ENCODE measurements at regions of chr11 and their contacts with region 1.

Region 1: DNA sequence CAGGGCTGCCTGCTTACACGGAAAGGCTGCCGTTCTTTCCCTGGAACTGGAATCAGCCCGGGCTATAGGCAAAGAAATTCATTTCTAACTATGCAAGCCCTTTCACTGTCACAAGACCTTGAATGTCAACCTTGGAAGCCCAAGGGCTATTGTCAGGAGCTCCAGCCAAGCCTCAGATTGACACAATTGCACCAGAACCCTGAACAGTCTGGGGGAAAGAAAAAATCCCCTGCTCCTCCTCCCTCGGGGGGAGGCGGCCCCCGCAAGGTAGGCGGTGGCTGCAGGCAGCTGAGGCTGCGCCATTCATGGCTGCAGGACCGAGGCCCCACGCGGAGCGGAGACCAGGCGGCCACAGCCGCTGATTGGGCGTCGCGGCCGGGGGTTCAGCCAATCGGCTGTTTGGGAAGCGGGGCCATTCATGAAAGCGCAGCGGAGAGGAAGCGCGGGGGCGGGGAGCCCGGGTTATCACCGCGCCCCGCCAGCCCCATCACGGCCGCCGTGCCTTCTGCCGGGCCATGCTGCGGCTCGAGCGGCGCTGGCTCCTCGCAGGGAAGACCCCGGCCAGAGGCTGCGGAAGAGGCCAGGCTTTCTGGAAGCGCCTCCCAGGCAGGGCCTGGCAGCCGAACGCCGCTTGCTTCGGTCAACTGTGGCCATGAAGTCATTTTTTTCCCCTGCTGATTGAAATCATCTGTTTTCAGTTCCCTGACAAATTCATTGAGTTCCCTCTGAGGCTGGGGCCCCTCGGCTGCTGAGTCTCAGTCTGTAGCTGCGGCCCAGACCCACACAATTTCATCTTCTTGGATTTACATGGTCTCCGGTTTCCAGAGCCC is 38.1 kb upstream of the LINC01488 start:
- DNase-seq: peak; percentile 90 to 97
- H3K4me3 ChIP-seq: peak overlapping the region; percentile 58
- H3K27ac ChIP-seq: peak overlapping the region; percentile 88
- H3K4me1 ChIP-seq: peaks cover 56% of the 10 kb centered on the region
- H3K27me3 ChIP-seq: no peaks in the 10 kb centered on the region
- CTCF ChIP-seq: no peak

Region 2: GRCh38 chr11:69337211-69337721 is 106.1 kb before region 1 on chr11:
- CTCF ChIA-PET with region 1: no interaction called
- POLR2A ChIA-PET with region 1: no interaction called
- intact Hi-C with region 1: loop called (anchors 1 kb)
- DNase-seq: peak in 1 of 2 experiments; percentile 36
- H3K4me3 ChIP-seq: no peak overlapping the region
- H3K27ac ChIP-seq: peak overlapping the region; percentile 24
- H3K4me1 ChIP-seq: peaks cover 54% of the 10 kb centered on the region
- H3K27me3 ChIP-seq: no peaks in the 10 kb centered on the region
- CTCF ChIP-seq: no peak

Region 3: GRCh38 chr11:69382131-69383128 is 60.9 kb before region 1 on chr11:
- CTCF ChIA-PET with region 1: no interaction called
- POLR2A ChIA-PET with region 1: no interaction called
- intact Hi-C with region 1: loop called (anchors 1 kb)
- DNase-seq: peak; percentile 82 to 88
- H3K4me3 ChIP-seq: peak overlapping the region; percentile 43; the same call in 1 of the 2 replicates
- H3K27ac ChIP-seq: peak overlapping the region; percentile 59
- H3K4me1 ChIP-seq: peaks cover 30% of the 10 kb centered on the region
- H3K27me3 ChIP-seq: no peaks in the 10 kb centered on the region
- CTCF ChIP-seq: no peak

Region 4: DNA sequence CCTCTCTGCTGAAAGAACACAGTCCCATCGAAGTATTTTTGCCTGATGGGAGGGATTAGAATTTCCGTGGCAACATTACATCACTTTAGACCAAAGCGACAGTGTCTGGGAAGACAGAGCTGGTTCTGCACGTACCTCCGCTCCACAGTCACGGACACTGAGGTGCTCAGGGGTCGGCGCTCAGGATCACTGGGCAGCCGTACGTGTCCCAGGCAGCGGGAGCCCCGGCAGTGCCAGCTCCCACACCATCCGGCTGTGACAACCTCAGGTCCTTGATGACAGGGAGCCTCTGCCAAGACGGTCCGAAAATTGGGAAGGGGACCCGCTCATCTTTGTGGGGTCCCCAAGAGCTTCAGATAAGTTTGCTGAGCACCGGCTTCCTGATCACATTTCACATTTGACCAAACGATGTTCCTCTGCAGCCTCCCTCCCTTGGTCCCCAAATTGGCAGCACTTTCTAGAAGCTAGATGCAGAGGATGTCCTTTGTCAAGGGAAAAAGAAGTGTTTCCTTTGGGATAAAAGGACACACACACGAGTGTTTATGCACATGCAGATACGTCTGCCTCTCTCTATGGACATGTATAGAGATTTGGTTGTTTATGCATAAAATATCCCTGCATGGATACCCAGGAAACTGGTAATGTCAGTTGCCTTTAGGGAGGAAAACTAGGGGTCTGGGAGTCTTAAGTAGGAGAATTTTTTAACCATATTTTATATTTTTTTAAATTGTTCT is 23.5 kb before region 1 on chr11:
- CTCF ChIA-PET with region 1: no interaction called
- POLR2A ChIA-PET with region 1: interaction called, 6 read pairs
- intact Hi-C with region 1: loop called (anchors 1 kb)
- DNase-seq: no peak
- H3K4me3 ChIP-seq: no peak overlapping the region; the same call in 1 of the 2 replicates
- H3K27ac ChIP-seq: peak overlapping the region; percentile 89
- H3K4me1 ChIP-seq: peaks cover 28% of the 10 kb centered on the region
- H3K27me3 ChIP-seq: no peaks in the 10 kb centered on the region
- CTCF ChIP-seq: no peak

Region 5: DNA sequence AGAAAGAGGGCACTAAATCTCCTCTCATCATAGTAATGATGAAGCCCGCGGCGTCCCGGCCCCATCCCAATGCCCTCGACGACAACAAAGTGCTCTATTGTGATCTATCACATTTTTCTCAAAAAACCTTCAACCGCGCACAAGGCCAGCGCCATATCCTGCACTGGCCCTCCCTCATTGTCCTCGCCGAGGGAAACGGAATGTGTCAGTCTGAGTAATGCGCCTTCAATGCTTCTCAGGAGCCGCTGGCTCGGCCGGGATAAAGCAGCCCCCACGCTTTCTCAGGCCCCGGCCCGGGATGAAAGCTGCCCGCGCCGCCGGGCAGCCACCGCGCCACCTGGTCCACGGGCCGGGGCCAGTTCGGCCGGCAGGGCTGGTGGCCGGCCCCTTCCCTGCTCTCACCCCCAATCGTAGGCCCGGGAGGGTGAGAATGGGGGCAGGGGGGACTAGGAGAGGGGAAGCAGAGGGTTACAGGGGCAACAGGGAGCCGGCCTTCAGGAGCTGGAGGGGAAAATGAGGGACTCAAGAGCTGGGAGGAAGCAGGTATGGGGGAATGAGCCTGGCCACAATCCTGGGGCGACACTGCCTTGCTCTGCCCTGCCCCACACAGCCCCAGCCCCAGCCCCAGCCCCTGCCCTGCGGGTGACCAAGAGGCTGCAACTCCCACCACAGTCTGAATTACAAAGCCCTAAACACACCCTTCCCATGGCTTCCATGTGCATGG is 28.1 kb after region 1 on chr11:
- CTCF ChIA-PET with region 1: no interaction called
- POLR2A ChIA-PET with region 1: no interaction called
- intact Hi-C with region 1: no loop called
- DNase-seq: no peak
- H3K4me3 ChIP-seq: no peak overlapping the region
- H3K27ac ChIP-seq: no peak overlapping the region
- H3K4me1 ChIP-seq: no peaks in the 10 kb centered on the region
- H3K27me3 ChIP-seq: no peaks in the 10 kb centered on the region
- CTCF ChIP-seq: no peak

Region 6: GRCh38 chr11:69497221-69497787 is 54.0 kb after region 1 on chr11:
- CTCF ChIA-PET with region 1: interaction called, 8 read pairs
- POLR2A ChIA-PET with region 1: no interaction called
- intact Hi-C with region 1: loop called (anchors 1 kb)
- DNase-seq: peak; percentile 81 to 93
- H3K4me3 ChIP-seq: no peak overlapping the region
- H3K27ac ChIP-seq: no peak overlapping the region
- H3K4me1 ChIP-seq: peaks cover 14% of the 10 kb centered on the region
- H3K27me3 ChIP-seq: peaks cover 18% of the 10 kb centered on the region
- CTCF ChIP-seq: no peak

Region 7: DNA sequence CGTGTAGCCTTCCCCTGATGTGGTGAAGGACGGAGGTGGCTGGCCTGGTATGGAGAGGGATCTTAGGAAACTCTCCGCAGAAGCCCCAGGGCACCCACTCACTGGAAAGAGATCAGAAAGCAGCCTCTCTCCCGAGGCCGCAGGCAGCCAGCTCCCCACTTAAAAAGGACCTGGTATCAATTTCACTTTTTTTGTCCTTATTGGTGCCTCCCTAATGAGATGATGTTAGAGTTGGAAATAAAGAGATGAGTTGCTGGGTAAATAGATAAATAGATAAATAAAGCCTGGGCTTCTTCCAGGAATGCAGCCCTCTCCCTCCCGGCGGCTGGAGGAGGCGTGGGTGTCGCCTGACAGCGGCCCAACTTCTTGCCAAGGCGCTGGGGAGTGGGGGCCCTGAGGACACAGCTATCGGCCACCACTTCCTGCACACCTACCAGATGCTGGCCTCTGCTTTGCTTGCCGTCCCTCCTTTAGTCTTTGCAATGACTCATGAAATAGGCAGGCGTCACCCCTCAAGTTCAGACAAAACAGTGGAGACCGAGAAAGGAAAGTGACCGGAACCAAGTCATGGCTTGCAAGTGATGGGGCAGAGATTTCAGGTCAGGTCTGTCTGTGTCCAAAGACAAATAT is 81.0 kb after region 1 on chr11:
- CTCF ChIA-PET with region 1: no interaction called
- POLR2A ChIA-PET with region 1: no interaction called
- intact Hi-C with region 1: loop called (anchors 1 kb)
- DNase-seq: peak in 1 of 2 experiments; percentile 89
- H3K4me3 ChIP-seq: no peak overlapping the region
- H3K27ac ChIP-seq: no peak overlapping the region
- H3K4me1 ChIP-seq: no peaks in the 10 kb centered on the region
- H3K27me3 ChIP-seq: peaks cover 5% of the 10 kb centered on the region; the same call in 1 of the 2 replicates
- CTCF ChIP-seq: no peak

Region 8: GRCh38 chr11:69598157-69598556 is 154.8 kb after region 1 on chr11:
- CTCF ChIA-PET with region 1: no interaction called
- POLR2A ChIA-PET with region 1: no interaction called
- intact Hi-C with region 1: loop called (anchors 2 kb)
- DNase-seq: peak; percentile 29 to 43
- H3K4me3 ChIP-seq: no peak overlapping the region
- H3K27ac ChIP-seq: no peak overlapping the region
- H3K4me1 ChIP-seq: peaks cover 17% of the 10 kb centered on the region
- H3K27me3 ChIP-seq: no peaks in the 10 kb centered on the region
- CTCF ChIP-seq: 0 out of 2 replicates have a peak, but pooled peaks have one; percentile 37

Measured in PC-9 (cell line).